ENCODE measurements at regions of chr16 and their contacts with region 1.

Region 1: GRCh38 chr16:4350787-4351659 is at the start of gene PAM16:
- DNase-seq: peak; percentile 47
- H3K4me3 ChIP-seq: peak within 1 kb of the TSS; percentile 86
- CTCF ChIP-seq: no peak

Region 2: GRCh38 chr16:4152266-4152665 is 198.8 kb before region 1 on chr16:
- CTCF ChIA-PET with region 1: no interaction called
- POLR2A ChIA-PET with region 1: no interaction called
- DNase-seq: no peak
- H3K4me3 ChIP-seq: no peak overlapping the region
- CTCF ChIP-seq: no peak

Region 3: DNA sequence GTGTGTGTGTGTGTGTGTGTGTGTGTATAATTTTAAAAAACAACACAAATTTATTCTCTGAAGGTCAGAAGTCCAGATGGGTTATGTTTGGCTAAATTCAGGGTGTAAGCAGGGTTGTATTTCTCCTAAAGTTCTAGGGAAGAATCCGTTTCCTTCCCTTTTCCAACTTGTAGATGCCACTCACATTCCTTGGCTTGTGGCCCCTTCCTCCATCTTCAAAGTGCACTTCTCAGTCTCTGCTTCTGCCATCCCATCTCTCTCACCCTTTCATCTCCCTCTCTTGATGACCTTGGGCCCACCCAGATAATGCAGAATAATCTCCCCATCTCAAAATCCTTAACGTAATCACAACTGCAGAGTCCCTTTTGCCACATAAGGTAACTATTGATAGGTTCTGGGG is 70.4 kb before region 1 on chr16:
- CTCF ChIA-PET with region 1: no interaction called
- POLR2A ChIA-PET with region 1: no interaction called
- DNase-seq: no peak
- H3K4me3 ChIP-seq: no peak overlapping the region
- CTCF ChIP-seq: no peak

Region 4: GRCh38 chr16:4339909-4340308 is 11.1 kb before region 1 on chr16:
- CTCF ChIA-PET with region 1: interaction called, 15 read pairs
- POLR2A ChIA-PET with region 1: interaction called, 3 read pairs
- DNase-seq: no peak
- H3K4me3 ChIP-seq: no peak overlapping the region
- CTCF ChIP-seq: no peak

Region 5: GRCh38 chr16:4425378-4426020 is 74.5 kb after region 1 on chr16 and contains the start of gene DNAJA3:
- CTCF ChIA-PET with region 1: no interaction called
- POLR2A ChIA-PET with region 1: no interaction called
- DNase-seq: peak; percentile 74
- H3K4me3 ChIP-seq: peak within 1 kb of the TSS; percentile 72
- CTCF ChIP-seq: no peak

Region 6: GRCh38 chr16:4475880-4476788 is 125.1 kb after region 1 on chr16 and contains the start of gene HMOX2:
- CTCF ChIA-PET with region 1: no interaction called
- POLR2A ChIA-PET with region 1: no interaction called
- DNase-seq: no peak
- H3K4me3 ChIP-seq: peak within 1 kb of the TSS; percentile 89
- CTCF ChIP-seq: peak; percentile 74

Measured in AG04449 (cell line).